ENCODE measurements at regions of chr7 and their contacts with region 1.

Region 1: GRCh38 chr7:129845178-129845971 is 107.4 kb downstream of the UBE2H start:
- DNase-seq: no peak
- ATAC-seq: no peak
- H3K4me3 ChIP-seq: no peak overlapping the region
- H3K4me3 Mint-ChIP-seq: no peak overlapping the region
- H3K27ac ChIP-seq: no peak overlapping the region
- H3K27ac Mint-ChIP-seq: peak overlapping the region; percentile 60
- H3K4me1 ChIP-seq: peaks cover 9 to 13% of the 10 kb centered on the region in 2 donors
- H3K4me1 Mint-ChIP-seq: peaks cover 26% of the 10 kb centered on the region
- H3K27me3 ChIP-seq: no peaks in the 10 kb centered on the region
- H3K27me3 Mint-ChIP-seq: no peaks in the 10 kb centered on the region
- CTCF ChIP-seq: no peak

Region 2: DNA sequence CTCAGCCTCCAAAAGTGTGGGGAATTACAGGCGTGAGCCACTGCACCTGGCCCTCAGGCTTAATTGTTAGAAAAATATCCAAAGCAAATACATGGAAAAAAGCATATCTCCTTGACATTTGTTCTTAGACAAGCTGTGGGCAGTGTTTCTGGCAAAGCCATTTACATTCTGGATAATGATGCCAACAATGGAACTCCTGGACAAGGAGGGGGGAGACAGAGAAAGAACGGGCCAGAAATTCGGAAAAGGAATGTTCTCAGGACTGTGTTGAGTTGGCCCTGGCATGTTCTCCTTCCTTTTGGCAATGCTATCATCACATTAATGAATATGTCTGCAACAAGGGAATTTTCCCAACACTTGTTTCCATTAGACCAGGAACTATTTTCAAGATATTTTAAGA is 18.7 kb after region 1 on chr7:
- CTCF ChIA-PET with region 1: no interaction called
- POLR2A ChIA-PET with region 1: no interaction called
- intact Hi-C with region 1: no loop called
- DNase-seq: no peak
- ATAC-seq: no peak
- H3K4me3 ChIP-seq: no peak overlapping the region
- H3K4me3 Mint-ChIP-seq: no peak overlapping the region
- H3K27ac ChIP-seq: no peak overlapping the region
- H3K27ac Mint-ChIP-seq: no peak overlapping the region
- H3K4me1 ChIP-seq: peaks cover 33 to 38% of the 10 kb centered on the region in 2 donors
- H3K4me1 Mint-ChIP-seq: peaks cover 63% of the 10 kb centered on the region
- H3K27me3 ChIP-seq: no peaks in the 10 kb centered on the region
- H3K27me3 Mint-ChIP-seq: no peaks in the 10 kb centered on the region
- CTCF ChIP-seq: no peak

Region 3: GRCh38 chr7:129882531-129882930 is 37.2 kb after region 1 on chr7:
- CTCF ChIA-PET with region 1: interaction called, 3 read pairs
- POLR2A ChIA-PET with region 1: no interaction called
- intact Hi-C with region 1: loop called (anchors 5 kb)
- DNase-seq: no peak
- ATAC-seq: no peak
- H3K4me3 ChIP-seq: no peak overlapping the region
- H3K4me3 Mint-ChIP-seq: no peak overlapping the region
- H3K27ac ChIP-seq: no peak overlapping the region
- H3K27ac Mint-ChIP-seq: no peak overlapping the region
- H3K4me1 ChIP-seq: peaks cover 0 to 5% of the 10 kb centered on the region in 2 donors
- H3K4me1 Mint-ChIP-seq: peaks cover 6% of the 10 kb centered on the region
- H3K27me3 ChIP-seq: no peaks in the 10 kb centered on the region
- H3K27me3 Mint-ChIP-seq: no peaks in the 10 kb centered on the region
- CTCF ChIP-seq: no peak

Measured in B cell (primary cell).